GM10248 (cell line): ENCODE measurements at regions of chr1 and their contacts with region 1.

Region 1: DNA sequence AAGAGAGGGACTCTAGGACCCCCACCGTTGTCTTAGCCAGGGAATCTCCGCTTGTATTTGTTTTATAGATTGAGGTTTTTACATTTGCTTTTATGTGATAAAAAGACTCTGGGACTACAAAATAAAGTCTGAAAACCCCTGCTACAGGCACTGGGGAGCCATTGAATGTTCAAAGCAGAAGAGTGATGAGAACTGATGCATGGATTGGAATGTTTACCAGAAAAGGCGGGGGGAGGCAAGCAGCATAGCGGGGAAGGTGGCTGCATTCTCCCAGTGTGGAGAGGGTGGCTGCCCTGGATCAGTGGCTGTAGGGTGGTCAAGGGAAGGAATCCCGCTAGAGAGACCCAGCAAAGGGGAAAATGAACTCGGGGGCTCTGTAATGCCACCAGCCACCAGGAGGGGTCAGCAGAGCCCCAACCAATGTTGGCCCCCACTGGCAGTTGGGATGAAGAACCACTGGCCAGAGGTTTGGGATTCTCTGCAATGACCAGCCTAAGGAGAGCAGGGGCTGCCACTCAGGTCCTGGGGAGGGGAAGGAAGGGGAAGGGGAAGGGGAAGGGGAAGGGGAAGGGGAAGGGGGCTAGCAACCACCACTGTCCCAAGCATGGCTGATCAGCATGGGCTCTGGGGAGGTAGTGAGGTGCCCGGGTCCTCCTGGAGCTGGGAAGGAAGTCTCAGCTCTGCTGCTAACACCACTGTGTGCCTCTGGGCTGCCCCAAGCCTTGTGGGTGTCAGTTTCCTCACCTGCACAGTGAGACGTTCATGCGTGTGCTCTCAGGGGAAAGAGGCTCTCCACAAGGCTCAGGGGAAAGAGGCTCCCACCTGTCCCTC is 19.2 kb upstream of the PEF1 start:
- DNase-seq: peak; percentile 86
- CTCF ChIP-seq: peak; percentile 96

Region 2: GRCh38 chr1:31607360-31607759 is 56.5 kb before region 1 on chr1:
- CTCF ChIA-PET with region 1: no interaction called
- POLR2A ChIA-PET with region 1: no interaction called
- DNase-seq: no peak
- CTCF ChIP-seq: no peak

Region 3: GRCh38 chr1:31651089-31651420 is 12.8 kb before region 1 on chr1:
- CTCF ChIA-PET with region 1: interaction called, 22 read pairs
- POLR2A ChIA-PET with region 1: no interaction called
- DNase-seq: no peak
- CTCF ChIP-seq: no peak

Region 4: DNA sequence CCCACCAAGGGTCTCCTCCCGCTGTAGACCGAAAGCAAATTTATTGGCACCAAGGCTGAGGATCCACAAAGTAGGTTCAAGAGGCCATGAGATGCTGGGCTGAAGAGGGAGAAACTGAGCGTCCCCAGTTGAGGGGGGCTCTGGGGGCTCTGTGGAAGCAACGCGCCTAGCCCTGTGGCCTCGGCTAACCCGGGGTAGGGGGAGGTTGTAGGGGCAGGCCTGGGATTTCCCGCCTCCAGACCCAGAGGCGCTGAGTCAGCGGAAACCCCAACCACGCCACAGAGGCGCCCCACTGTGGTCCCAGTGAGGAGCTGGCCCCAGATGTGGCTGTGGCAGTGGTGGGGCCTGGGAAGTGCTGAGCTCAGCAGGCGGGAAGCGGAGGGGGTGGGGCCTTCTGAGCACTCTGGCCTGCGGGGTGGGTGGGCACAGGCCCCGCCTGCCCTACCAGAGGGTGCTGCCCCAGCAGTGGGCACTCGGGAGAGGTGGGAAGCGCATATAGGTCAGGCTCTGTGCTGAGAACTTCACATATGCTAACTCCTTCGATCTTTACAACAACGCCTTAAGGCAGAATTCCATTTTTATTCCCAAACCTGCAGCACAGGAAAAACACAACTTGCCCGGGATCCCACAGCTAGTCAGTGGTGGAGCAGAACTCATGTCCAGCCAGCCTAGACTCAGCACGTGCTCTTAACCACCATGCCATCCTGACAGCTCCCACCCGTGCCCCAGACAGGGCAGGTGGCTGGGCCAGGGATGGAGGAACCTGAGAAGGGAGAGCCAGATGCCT is 41.4 kb after region 1 on chr1:
- CTCF ChIA-PET with region 1: interaction called, 36 read pairs
- POLR2A ChIA-PET with region 1: no interaction called
- DNase-seq: peak; percentile 79
- CTCF ChIP-seq: peak; percentile 76

Region 5: DNA sequence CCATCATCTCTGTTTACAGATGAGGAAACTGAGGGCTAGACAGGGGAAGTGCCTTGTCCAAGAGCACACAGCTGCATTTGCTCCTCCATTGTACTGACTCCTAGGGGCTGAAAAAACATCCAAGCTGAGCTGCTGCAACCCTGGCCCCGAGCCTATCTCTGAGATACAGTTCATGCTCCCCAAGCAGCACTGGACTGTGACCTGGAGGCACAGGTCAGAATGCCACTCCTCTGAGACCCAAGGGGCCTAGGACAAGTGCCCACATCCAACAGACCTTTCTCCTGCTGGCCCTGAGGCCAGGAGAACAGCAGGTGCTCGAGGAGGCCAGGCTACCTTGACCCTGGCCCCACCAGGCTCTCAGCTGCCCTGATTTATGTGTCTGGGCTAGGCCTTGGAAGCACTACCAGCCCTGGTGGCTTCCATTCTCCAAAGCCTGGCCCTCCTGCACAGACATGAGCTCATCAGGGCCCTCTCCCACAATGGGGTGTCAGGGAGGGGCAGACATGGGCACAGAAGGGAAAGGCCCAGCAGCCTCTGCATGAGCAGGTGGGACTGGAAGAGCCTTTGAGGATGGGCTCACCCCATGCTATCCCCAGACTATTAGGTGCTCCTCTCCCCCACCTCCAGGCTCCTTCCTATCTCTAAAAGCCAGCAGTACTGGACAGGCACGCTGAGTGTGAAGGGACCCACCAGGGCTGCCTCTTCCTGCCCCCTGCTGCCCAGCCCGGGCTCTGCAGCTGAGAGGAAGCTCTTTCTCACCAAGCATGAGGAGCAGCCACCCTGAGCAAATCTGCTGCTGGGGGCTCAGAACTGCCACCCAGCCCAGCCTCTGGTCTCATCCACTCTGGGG is 81.5 kb after region 1 on chr1:
- CTCF ChIA-PET with region 1: interaction called, 67 read pairs
- POLR2A ChIA-PET with region 1: no interaction called
- DNase-seq: peak; percentile 87
- CTCF ChIP-seq: peak; percentile 74